PC-3 (cell line): ENCODE measurements at regions of chr1 and their contacts with region 1.

Region 1: GRCh38 chr1:203944651-203945404 is 83.4 kb downstream of the SNRPE start:
- DNase-seq: no peak
- ATAC-seq: no peak
- H3K4me3 ChIP-seq: no peak overlapping the region
- H3K27ac ChIP-seq: no peak overlapping the region
- H3K4me1 ChIP-seq: no peaks in the 10 kb centered on the region
- H3K27me3 ChIP-seq: no peaks in the 10 kb centered on the region
- CTCF ChIP-seq: no peak

Region 2: DNA sequence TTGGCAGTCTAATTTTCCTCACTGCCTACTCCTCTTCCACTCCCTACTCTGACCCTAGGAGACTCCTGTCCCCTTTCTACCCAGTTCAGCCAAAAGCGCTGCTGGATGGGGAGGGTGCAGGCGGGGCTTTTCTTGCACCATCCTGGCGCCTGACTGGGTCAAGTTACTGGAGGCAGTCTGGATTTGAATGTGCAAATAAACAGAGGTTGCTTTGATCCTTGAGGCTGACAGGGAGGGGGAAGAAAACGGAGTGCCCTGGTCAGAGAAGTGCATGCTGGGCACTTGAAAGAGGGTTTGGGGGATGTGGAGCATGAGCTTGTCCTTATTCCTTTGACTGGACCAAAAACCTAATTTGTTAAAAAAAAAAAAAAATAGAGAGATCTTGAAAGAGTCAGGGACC is 51.3 kb after region 1 on chr1:
- CTCF ChIA-PET with region 1: no interaction called
- POLR2A ChIA-PET with region 1: no interaction called
- intact Hi-C with region 1: loop called (anchors 10 kb)
- DNase-seq: no peak
- ATAC-seq: no peak
- H3K4me3 ChIP-seq: no peak overlapping the region
- H3K27ac ChIP-seq: no peak overlapping the region
- H3K4me1 ChIP-seq: peaks cover 10% of the 10 kb centered on the region; the same call in 1 of the 2 replicates
- H3K27me3 ChIP-seq: no peaks in the 10 kb centered on the region
- CTCF ChIP-seq: no peak

Region 3: DNA sequence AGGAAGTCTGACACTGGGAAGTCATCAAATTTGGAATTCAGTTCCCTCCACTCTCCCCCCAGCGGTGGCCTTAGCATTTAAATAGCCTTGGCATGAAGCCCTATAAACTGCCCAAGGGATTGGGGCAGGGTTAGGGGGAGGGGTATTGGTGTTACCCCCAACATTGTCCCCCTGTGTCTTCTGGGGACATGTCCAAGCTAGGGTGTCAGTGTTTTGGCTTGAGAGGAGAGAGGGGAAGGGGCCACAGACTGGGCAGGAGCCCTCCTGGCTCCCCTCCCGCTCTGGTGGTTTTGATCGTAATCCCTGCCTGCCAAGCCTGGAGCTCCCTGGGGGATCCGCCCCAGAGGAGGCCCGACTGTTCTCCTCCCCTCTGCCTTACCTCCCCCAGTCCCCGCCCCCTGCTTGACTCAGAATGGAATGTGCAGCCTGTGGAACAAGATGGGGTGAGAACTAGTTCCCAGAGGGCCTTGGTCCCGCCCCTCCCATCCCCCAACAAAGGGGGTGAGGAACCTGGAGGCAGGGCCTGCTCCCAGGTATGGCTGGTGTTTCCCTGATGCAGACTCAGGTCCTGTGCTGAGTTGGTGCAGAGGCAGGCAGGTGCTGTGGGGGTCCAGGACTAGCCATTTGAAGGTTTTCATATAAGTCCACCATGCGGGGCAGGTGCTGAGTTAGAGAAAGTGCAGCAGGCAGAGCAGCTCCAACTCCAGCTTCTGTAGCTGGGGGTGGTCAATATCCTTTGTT is 135.5 kb after region 1 on chr1:
- CTCF ChIA-PET with region 1: interaction called, 17 read pairs
- POLR2A ChIA-PET with region 1: no interaction called
- intact Hi-C with region 1: no loop called
- DNase-seq: peak; percentile 96
- ATAC-seq: peak; percentile 87
- H3K4me3 ChIP-seq: peak overlapping the region; percentile 53
- H3K27ac ChIP-seq: peak overlapping the region; percentile 69
- H3K4me1 ChIP-seq: peaks cover 75% of the 10 kb centered on the region
- H3K27me3 ChIP-seq: no peaks in the 10 kb centered on the region
- CTCF ChIP-seq: no peak; the same call in 1 of the 2 replicates